Prostate gland (tissue), 2 donors: ENCODE measurements at regions of chr4 and their contacts with region 1.

Region 1: GRCh38 chr4:127782274-127783025 is at the start of gene HSPA4L:
- DNase-seq: no peak
- H3K4me3 ChIP-seq: peak within 1 kb of the TSS; percentile 61
- H3K27ac ChIP-seq: peak within 1 kb of the TSS; percentile 72 to 76
- H3K4me1 ChIP-seq: no peaks in the 10 kb centered on the region
- H3K27me3 ChIP-seq: no peaks in the 10 kb centered on the region
- CTCF ChIP-seq: peak in 2 of 4 experiments; percentile 46 to 79
- POLR2A ChIP-seq: peak; percentile 90
- total RNA-seq, gene HSPA4L: 8.8 to 12.9 TPM

Region 2: DNA sequence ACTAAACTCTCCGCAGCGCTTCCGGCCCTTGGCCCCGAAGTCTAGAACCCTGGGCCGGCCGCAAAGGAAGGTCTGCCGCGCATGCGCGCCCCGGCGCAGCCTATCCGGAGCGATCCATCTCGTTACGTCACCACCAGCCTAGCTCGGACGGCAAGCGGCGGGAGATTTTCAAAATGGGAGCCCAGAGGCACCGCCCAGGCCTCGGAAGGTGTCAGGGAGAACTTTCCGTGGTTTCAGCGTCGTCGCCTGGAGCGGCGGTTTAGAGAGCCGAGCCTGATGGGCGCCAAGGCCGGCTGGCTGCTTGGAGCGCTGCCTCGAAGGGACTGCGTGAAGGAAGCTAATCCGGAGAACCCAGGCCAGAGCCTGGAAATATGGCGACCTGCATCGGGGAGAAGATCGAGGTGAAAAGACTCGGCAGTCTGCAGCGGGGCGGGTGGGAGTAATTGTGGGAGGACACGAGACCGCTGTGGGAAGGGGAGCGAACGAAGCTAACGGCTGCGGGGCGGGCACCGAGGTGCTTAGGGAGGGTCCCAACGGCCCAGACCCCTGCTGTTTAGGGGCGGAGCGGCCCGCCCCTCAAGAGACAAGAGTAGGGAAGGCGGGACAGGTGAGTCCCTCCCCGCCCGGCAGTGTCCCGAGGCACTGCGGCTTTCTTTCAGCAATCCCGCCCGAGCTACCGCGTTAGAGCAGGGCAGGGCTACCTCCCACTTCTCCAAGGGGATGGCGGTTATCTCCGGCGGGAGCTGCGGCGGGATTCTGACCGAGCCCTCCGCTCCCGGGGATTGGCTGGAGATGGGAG is 98.5 kb after region 1 on chr4 and contains the start of gene PLK4:
- intact Hi-C with region 1: loop called (anchors 5 kb)
- DNase-seq: peak; percentile 95
- H3K4me3 ChIP-seq: peak within 1 kb of the TSS; percentile 67 to 75
- H3K27ac ChIP-seq: peak within 1 kb of the TSS; percentile 84 to 87
- H3K4me1 ChIP-seq: no peaks in the 10 kb centered on the region
- H3K27me3 ChIP-seq: no peaks in the 10 kb centered on the region
- CTCF ChIP-seq: no peak
- POLR2A ChIP-seq: peak; percentile 78
- total RNA-seq, gene PLK4: 6.8 to 14.6 TPM

Region 3: GRCh38 chr4:127965062-127965802 is 182.8 kb after region 1 on chr4 and contains the starts of genes ABHD18 and MFSD8:
- intact Hi-C with region 1: loop called (anchors 10 kb)
- DNase-seq: peak; percentile 99
- H3K4me3 ChIP-seq: peak within 1 kb of the TSS; percentile 72 to 82
- H3K27ac ChIP-seq: peak within 1 kb of the TSS; percentile 90 to 91
- H3K4me1 ChIP-seq: no peaks in the 10 kb centered on the region
- H3K27me3 ChIP-seq: no peaks in the 10 kb centered on the region
- CTCF ChIP-seq: peak; percentile 34 to 62 (median 50)
- POLR2A ChIP-seq: peak; percentile 87
- total RNA-seq, gene ABHD18: 5.7 to 10.6 TPM
- total RNA-seq, gene MFSD8: 12.6 to 21.0 TPM

Region 4: DNA sequence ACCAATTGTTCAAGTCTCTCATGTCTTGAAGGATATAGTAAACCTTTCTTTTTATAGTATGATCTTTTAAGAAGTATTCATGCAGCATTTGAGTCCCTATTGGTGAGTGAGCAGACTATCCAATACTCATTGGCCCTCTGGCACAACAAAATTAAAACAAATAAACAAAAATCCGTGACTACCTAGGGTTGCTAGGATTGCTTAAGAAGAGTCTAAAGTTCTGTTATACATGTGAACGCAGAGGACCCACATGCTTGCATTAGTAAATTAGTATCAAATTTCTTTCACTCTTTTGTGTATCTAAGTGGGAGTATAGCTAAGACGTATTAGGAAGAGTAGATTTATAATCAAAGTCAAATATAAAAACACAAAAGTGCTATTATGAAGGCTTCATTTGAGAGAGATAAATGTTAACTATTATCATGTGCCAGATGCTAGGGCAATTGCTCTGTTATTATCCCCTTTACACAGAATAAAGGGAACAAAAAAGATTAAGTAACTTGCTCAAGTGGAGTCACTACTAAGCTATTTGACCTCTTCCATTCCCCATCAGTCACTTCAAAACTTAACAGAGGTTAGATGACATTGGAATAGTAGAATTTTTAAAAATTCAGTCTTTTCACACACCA is 249.4 kb after region 1 on chr4:
- intact Hi-C with region 1: no loop called
- DNase-seq: no peak
- H3K4me3 ChIP-seq: no peak overlapping the region
- H3K27ac ChIP-seq: no peak overlapping the region
- H3K4me1 ChIP-seq: no peaks in the 10 kb centered on the region
- H3K27me3 ChIP-seq: no peaks in the 10 kb centered on the region
- CTCF ChIP-seq: no peak
- POLR2A ChIP-seq: no peak

Region 5: DNA sequence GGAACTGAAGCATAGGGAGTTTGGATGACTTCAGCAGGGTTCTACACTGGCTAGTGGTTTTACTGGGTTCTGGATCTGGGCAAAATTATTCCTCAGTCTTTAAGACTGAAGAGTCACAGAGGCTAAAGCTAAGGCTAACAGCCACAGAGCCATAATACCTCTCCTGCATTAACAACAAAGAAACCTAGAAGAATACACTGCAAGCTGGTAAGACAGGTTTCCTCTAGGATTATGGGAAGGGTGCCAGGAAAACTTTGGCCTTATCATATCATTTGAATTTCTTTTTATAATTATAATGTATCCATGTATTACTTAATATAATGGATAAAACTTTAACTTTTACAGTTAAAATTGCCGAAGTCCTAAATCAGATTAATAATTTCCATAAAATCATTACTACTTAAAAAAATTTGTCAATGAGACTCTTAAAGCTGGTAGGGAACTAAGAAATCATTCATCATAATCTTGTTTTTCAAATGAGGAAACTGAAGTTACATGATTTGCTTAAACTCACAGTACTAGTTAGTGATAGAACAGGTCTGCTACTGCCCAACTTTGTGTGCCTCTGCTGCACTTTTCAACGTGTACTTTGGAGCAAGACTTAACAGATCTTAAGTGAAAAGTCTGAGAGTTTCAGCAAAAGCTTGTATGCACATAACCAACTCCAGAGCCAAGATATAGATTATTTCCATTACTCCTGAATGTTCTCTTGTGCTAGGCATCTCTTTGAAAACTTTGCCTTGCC is 529.4 kb after region 1 on chr4:
- intact Hi-C with region 1: no loop called
- DNase-seq: peak; percentile 50
- H3K4me3 ChIP-seq: no peak overlapping the region
- H3K27ac ChIP-seq: peak overlapping the region; percentile 8 to 34
- H3K4me1 ChIP-seq: no peaks in the 10 kb centered on the region
- H3K27me3 ChIP-seq: no peaks in the 10 kb centered on the region
- CTCF ChIP-seq: no peak
- POLR2A ChIP-seq: no peak